Heart left ventricle (tissue), 16 donors: ENCODE measurements at regions of chr17 and their contacts with region 1.

Region 1: DNA sequence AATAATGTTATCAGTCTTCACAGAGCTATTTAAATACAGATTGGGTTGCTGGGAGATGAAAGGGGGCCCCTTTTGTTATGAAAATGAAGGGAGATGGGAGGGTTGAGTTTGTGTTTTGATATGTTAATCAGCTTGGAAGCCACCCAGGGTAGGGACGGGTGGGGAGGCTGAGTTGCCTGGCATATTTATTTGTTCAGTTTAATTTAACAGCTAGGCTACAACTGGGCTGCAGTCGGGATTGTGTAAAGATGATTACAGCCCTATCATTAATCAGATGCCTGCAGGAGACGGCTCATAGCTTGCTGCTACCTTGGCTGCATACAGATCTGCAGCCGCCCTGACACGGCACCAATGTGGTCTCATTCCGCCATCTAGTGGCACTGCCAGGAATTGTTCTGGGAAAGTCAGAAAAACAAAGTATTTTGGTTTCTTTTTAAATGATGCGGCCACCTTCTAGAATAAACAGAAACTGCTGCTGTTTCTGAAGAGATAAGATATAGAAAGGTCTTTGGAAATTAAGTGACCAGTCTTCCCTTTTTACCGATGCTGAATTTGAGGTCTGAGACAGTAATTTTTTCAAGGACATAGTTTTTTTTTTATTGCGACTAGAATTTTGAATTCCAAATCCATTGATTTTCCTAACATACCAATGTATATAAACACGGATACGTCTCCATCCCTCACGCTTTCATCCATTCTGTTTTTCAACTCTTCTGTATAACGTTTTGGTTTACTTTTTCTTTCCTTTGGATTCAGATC is 458.0 kb upstream of the ASIC2 start:
- DNase-seq: peak; percentile 41 to 68 (median 53)
- ATAC-seq: peak; percentile 58 to 83 (median 74)
- H3K4me3 ChIP-seq: peak overlapping the region in 4 of 12 donors; percentile 8 to 47 (median 25)
- H3K27ac ChIP-seq: no peak overlapping the region
- H3K4me1 ChIP-seq: peaks cover 0 to 4% (median 0%) of the 10 kb centered on the region in 12 donors
- H3K27me3 ChIP-seq: peaks cover 0 to 40% (median 11%) of the 10 kb centered on the region in 9 donors
- CTCF ChIP-seq: peak; percentile 87 to 99 (median 94)
- POLR2A ChIP-seq: no peak

Region 2: GRCh38 chr17:33049781-33050414 is 701.2 kb before region 1 on chr17:
- intact Hi-C with region 1: loop called in 1 of 10 experiments (anchors 10 kb)
- DNase-seq: peak in 3 of 5 donors; percentile 21 to 42 (median 34)
- ATAC-seq: no peak
- H3K4me3 ChIP-seq: no peak overlapping the region
- H3K27ac ChIP-seq: no peak overlapping the region
- H3K4me1 ChIP-seq: peaks cover 0 to 1% (median 0%) of the 10 kb centered on the region in 12 donors
- H3K27me3 ChIP-seq: peaks cover 0 to 21% (median 0%) of the 10 kb centered on the region in 9 donors
- CTCF ChIP-seq: peak; percentile 59 to 84 (median 76)
- POLR2A ChIP-seq: no peak

Region 3: DNA sequence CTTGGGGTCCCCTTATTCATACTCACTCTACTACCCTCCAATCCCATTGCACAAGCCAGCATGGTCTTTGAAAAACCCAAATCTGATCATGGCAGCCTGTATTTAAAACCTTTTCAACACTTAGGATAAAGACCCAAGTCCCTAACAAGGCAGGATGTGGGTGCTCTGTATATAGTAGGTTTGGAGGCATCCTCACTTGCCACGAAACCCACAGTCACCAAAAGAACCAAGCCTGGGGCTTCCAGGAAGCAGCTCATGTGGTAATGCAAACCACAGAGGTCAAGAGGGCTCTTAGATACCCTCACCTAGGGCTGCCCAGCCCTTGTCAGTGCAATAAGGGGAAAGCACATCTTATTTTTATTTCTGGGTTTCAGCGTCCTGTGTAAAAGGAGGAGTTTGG is 239.5 kb before region 1 on chr17:
- intact Hi-C with region 1: loop called in 1 of 10 experiments (anchors 10 kb)
- DNase-seq: no peak
- ATAC-seq: no peak
- H3K4me3 ChIP-seq: no peak overlapping the region
- H3K27ac ChIP-seq: no peak overlapping the region
- H3K4me1 ChIP-seq: peaks cover 0 to 8% (median 0%) of the 10 kb centered on the region in 12 donors
- H3K27me3 ChIP-seq: peaks cover 0 to 3% (median 0%) of the 10 kb centered on the region in 9 donors
- CTCF ChIP-seq: no peak
- POLR2A ChIP-seq: no peak

Region 4: DNA sequence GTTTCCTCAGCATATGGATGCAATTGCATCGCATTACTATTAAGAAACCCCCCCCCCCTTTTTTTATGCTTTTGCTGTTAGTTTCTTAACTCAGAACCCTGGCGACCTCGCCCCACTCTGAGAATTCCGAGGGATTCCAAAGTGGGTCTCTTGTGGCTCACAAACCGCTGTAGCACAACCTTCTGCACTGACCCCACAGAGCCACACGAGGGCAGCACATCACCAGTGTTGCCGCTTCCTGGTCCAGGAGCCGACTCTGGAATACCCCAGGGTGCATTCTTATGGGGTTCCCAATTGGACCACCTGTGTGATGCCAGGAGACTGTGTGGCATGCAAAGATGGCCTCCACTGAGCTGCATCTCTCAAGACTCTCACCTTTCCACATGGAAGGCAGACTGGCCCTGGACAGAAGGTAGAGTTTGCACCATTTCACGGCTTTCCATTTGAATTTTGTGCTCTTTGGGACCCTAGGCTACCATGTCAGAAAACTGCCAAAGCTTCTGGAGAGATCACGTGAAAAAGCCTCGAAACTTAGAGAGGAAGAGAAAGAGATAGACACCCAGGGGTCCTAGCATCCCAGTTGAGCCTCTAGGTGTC is 25.3 kb before region 1 on chr17:
- intact Hi-C with region 1: loop called in 1 of 10 experiments (anchors 1 kb)
- DNase-seq: peak in 1 of 5 donors; percentile 29
- ATAC-seq: peak in 1 of 4 donors; percentile 48
- H3K4me3 ChIP-seq: no peak overlapping the region
- H3K27ac ChIP-seq: no peak overlapping the region
- H3K4me1 ChIP-seq: no peaks in the 10 kb centered on the region
- H3K27me3 ChIP-seq: peaks cover 0 to 45% (median 10%) of the 10 kb centered on the region in 9 donors
- CTCF ChIP-seq: peak; percentile 29 to 66 (median 49)
- POLR2A ChIP-seq: no peak